Panc1 (cell line): ENCODE measurements at regions of chr3 and their contacts with region 1.

Region 1: GRCh38 chr3:41199866-41200668 is 762 bp downstream of the CTNNB1 start:
- DNase-seq: no peak
- ATAC-seq: peak; percentile 20
- H3K4me3 ChIP-seq: peak overlapping the region; percentile 89 to 94
- H3K27ac ChIP-seq: peak overlapping the region; percentile 85
- H3K4me1 ChIP-seq: peaks cover 24% of the 10 kb centered on the region
- H3K27me3 ChIP-seq: no peaks in the 10 kb centered on the region
- CTCF ChIP-seq: no peak

Region 2: DNA sequence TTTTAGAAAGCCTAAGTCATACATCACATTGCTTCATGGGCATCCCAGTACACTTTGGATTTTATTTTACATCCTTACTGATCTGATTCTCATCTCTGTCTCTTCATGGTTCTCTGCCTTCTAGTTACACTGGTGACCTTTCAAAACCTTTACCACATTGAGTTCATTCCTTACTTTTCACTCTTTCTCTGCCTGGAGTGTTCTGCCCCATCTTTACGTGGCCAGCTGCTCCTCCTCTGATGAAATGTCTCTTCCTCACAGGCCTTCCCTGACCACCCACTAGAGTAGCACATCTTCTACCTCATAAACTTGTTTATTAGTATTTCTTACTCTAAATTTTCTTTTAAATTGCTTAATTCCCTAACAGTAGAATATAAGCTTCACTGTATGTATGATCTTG is 16.9 kb after region 1 on chr3:
- CTCF ChIA-PET with region 1: no interaction called
- POLR2A ChIA-PET with region 1: interaction called, 12 read pairs
- in situ Hi-C with region 1: no loop called
- intact Hi-C with region 1: no loop called
- DNase-seq: no peak
- ATAC-seq: no peak
- H3K4me3 ChIP-seq: no peak overlapping the region
- H3K27ac ChIP-seq: no peak overlapping the region
- H3K4me1 ChIP-seq: peaks cover 17% of the 10 kb centered on the region; the same call in 1 of the 2 replicates
- H3K27me3 ChIP-seq: no peaks in the 10 kb centered on the region
- CTCF ChIP-seq: no peak